ENCODE measurements at regions of chr1 and their contacts with region 1.

Region 1: GRCh38 chr1:21200767-21201166 is 24.1 kb upstream of the EIF4G3 start:
- DNase-seq: peak; percentile 15
- ATAC-seq: no peak
- H3K4me3 ChIP-seq: no peak overlapping the region
- H3K27ac ChIP-seq: no peak overlapping the region
- H3K4me1 ChIP-seq: no peaks in the 10 kb centered on the region
- H3K27me3 ChIP-seq: no peaks in the 10 kb centered on the region
- CTCF ChIP-seq: no peak

Region 2: GRCh38 chr1:20981915-20982314 is 218.9 kb before region 1 on chr1:
- CTCF ChIA-PET with region 1: no interaction called
- POLR2A ChIA-PET with region 1: no interaction called
- intact Hi-C with region 1: loop called (anchors 1 kb)
- DNase-seq: peak; percentile 55
- ATAC-seq: peak; percentile 67
- H3K4me3 ChIP-seq: no peak overlapping the region
- H3K27ac ChIP-seq: no peak overlapping the region
- H3K4me1 ChIP-seq: peaks cover 7% of the 10 kb centered on the region; the same call in 1 of the 2 replicates
- H3K27me3 ChIP-seq: no peaks in the 10 kb centered on the region
- CTCF ChIP-seq: peak; percentile 63

Region 3: DNA sequence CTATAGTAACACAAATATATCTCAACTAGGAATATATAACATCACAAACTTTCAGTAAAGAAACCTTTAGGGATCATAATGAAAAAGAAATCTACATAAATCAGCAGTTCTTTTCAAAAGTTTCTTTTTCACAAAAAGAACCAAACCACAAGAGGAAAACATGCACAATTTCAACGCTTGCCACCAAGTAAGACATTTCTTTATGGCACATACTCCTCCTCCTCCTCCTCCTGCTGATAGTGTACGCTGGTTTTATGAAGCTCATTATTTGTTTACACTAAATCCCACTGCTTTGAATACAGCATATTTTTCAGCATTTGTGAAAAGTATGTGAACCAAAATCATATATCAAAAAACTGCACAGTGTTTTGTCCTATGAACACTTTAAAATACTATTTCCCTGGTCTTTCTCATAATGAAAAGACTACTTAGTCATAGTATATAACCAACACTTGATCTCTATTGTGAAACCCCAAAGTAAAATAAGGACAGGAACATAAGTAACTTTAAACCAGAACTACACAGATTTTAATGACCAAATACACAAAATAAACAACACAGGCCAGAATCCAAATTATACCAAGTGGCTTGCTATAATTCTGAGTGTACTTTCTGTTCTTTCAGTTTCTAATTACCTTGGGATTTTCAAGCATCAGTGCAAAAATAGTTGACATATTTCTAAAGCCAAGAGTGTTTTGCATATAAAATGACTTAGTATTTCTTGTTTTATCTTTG is 208.3 kb before region 1 on chr1:
- CTCF ChIA-PET with region 1: no interaction called
- POLR2A ChIA-PET with region 1: no interaction called
- intact Hi-C with region 1: loop called (anchors 1 kb)
- DNase-seq: no peak
- ATAC-seq: no peak
- H3K4me3 ChIP-seq: no peak overlapping the region
- H3K27ac ChIP-seq: no peak overlapping the region
- H3K4me1 ChIP-seq: no peaks in the 10 kb centered on the region
- H3K27me3 ChIP-seq: no peaks in the 10 kb centered on the region
- CTCF ChIP-seq: no peak

Region 4: GRCh38 chr1:21184276-21184675 is 16.5 kb before region 1 on chr1:
- CTCF ChIA-PET with region 1: interaction called, 15 read pairs
- POLR2A ChIA-PET with region 1: no interaction called
- intact Hi-C with region 1: no loop called
- DNase-seq: no peak
- ATAC-seq: no peak
- H3K4me3 ChIP-seq: no peak overlapping the region
- H3K27ac ChIP-seq: no peak overlapping the region
- H3K4me1 ChIP-seq: no peaks in the 10 kb centered on the region
- H3K27me3 ChIP-seq: no peaks in the 10 kb centered on the region
- CTCF ChIP-seq: no peak

Region 5: GRCh38 chr1:21324368-21325141 is 123.8 kb after region 1 on chr1:
- CTCF ChIA-PET with region 1: no interaction called
- POLR2A ChIA-PET with region 1: interaction called, 13 read pairs
- intact Hi-C with region 1: no loop called
- DNase-seq: peak; percentile 96
- ATAC-seq: peak; percentile 96
- H3K4me3 ChIP-seq: peak overlapping the region; percentile 40; the same call in 1 of the 2 replicates
- H3K27ac ChIP-seq: peak overlapping the region; percentile 95
- H3K4me1 ChIP-seq: peaks cover 57% of the 10 kb centered on the region
- H3K27me3 ChIP-seq: no peaks in the 10 kb centered on the region
- CTCF ChIP-seq: no peak

Measured in PC-3 (cell line).